Mammary epithelial cell (primary cell): ENCODE measurements at regions of chr15 and their contacts with region 1.

Region 1: DNA sequence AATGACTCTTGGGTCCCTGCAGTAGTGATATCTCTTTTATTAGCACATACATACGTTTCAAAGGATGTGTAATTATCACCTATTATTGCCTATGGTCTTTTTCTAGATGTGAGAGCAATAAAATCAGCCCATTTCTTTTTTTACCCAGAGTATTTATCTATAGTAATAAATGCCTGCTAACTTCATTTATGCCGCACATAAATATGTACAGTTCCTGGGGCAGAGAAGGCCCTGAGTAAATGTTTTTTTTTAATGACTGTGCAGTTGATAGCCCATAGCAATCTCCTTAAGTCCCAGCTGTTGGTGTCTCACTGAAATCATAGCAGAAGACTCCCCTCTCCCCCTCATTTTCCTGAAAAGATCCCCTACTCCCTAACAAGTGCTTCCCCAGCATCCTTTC is 16.7 kb downstream of the RAB8B start:
- DNase-seq: no peak
- H3K4me3 ChIP-seq: no peak overlapping the region
- H3K27ac ChIP-seq: no peak overlapping the region
- H3K4me1 ChIP-seq: no peaks in the 10 kb centered on the region
- H3K27me3 ChIP-seq: no peaks in the 10 kb centered on the region
- CTCF ChIP-seq: no peak

Region 2: GRCh38 chr15:63163225-63163624 is 42.9 kb before region 1 on chr15:
- CTCF ChIA-PET with region 1: no interaction called
- dilution Hi-C with region 1: loop called (anchors 5 kb)
- in situ Hi-C with region 1: no loop called
- intact Hi-C with region 1: no loop called
- DNase-seq: no peak
- H3K4me3 ChIP-seq: no peak overlapping the region
- H3K27ac ChIP-seq: no peak overlapping the region
- H3K4me1 ChIP-seq: no peaks in the 10 kb centered on the region
- H3K27me3 ChIP-seq: no peaks in the 10 kb centered on the region
- CTCF ChIP-seq: no peak

Region 3: DNA sequence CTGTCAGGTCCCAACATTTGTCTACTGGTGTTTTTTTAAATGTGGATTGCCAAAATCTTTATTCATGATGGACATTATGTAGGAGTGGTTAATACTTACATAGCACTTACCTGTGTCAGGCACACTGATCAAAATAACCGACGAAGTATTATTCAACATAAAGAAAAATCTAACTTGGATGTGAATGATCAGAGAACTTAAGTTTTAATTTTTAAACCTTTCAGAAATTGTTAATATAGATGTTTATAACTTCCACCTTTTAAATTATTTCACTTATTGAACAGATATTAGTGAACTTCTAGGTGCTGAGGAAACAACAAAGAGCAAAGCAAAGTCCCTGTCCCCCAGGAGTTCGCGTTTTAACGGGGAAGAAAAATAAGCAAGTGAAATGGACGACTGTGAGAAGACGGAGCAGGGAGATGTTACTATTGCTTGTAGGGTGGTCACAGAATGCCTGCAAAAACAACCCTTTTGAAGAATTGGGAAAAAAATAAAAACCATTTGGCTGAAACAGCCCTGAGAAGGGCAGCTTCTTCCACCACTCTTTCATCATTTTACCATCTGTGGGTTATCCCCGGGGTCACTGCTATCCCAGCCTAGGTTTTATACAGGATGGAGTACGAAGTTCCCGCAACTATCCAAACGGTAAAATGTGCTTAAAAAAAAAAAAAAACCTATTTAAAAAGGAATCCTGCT is 70.4 kb after region 1 on chr15:
- CTCF ChIA-PET with region 1: no interaction called
- dilution Hi-C with region 1: no loop called
- in situ Hi-C with region 1: no loop called
- intact Hi-C with region 1: no loop called
- DNase-seq: peak; percentile 4
- H3K4me3 ChIP-seq: peak overlapping the region; percentile 65 to 85 (median 77)
- H3K27ac ChIP-seq: peak overlapping the region; percentile 66
- H3K4me1 ChIP-seq: peaks cover 13% of the 10 kb centered on the region
- H3K27me3 ChIP-seq: no peaks in the 10 kb centered on the region
- CTCF ChIP-seq: no peak

Region 4: GRCh38 chr15:63487076-63487757 is 281.1 kb after region 1 on chr15:
- CTCF ChIA-PET with region 1: no interaction called
- dilution Hi-C with region 1: no loop called
- in situ Hi-C with region 1: no loop called
- intact Hi-C with region 1: no loop called
- DNase-seq: peak; percentile 58
- H3K4me3 ChIP-seq: no peak overlapping the region
- H3K27ac ChIP-seq: no peak overlapping the region
- H3K4me1 ChIP-seq: peaks cover 10% of the 10 kb centered on the region
- H3K27me3 ChIP-seq: no peaks in the 10 kb centered on the region
- CTCF ChIP-seq: peak; percentile 90 to 96